Calu3 (cell line): ENCODE measurements at regions of chr3 and their contacts with region 1.

Region 1: DNA sequence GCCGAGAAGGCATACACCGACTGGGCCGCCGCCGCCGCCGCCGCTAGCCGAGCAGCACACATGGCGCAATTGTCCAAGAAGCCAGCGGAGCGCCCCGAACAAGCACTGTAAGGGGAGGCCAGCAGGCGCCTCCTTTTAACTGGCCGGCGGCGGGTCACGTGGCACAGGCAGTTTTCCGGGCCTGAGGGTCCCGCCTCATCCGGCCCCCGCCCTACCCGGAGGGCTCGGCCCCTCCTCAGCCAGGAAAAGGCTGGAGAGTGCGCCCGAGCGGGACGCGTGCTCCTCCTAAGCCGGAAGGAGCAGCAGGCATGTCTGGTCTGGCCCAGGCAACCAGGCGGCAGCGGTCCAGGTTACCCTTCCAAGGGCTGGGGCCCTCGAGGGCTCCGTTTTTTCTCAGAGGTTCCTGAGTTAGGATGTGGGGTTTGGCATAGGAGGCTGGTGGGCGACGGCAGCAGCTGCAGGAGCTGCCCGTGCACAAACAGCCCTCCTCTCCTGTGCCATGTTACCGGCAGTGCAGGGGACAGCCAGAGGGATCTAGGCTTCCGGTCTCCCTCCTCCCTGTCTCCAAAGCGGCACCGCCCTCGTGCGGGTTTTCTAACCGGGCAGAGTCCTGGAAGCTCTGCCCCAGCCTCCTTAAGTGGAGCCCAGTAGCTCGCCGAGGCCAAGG is at the start of gene GPX1:
- DNase-seq: peak; percentile 94
- H3K4me3 Mint-ChIP-seq: peak within 1 kb of the TSS; percentile 87
- H3K27ac Mint-ChIP-seq: peak within 1 kb of the TSS; percentile 81
- H3K4me1 Mint-ChIP-seq: peaks cover 9% of the 10 kb centered on the region
- H3K27me3 Mint-ChIP-seq: no peaks in the 10 kb centered on the region
- CTCF ChIP-seq: no peak
- total RNA-seq, gene GPX1: 143 and 151 TPM in 2 replicates

Region 2: DNA sequence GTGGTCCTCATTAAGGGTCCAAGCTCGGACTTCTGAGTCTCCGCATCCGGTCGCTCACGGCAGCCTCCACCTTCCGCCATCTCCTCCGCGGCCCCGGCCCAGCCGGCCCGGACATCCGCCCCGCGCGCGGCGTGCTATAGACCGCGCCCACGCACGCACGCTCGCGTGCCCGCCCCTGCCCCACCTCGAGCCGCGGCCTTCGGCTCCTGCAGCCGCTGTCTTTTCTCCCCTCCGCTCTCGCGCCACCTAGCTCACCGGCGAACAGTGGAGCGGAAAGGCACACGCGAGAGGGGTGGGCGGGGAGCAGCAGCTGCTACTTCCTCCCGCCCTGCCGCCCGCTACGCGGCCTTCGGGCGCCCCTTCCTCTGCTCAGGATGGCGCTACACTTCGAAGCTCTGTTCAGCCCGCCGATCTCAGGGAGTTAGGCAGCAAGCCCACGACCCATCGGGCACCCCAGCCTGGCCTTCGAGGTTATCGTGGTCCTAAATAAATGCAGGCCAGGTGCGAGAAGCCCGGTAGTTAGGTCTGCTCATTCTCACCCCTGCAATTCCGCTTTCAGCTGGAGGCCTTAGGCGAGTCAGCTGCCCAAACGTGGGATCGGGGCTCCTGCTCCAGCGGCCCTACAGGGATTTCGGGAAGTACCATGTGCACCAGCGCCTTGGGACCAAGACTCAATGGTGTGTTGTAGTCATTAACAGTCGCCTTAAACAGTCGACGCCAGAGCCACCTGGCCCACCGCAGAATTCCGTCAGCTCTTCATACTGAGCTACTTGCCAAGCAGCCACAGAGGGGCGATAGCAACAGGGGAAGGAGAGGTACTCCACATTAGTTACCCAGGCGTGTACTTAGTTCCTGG is 18.2 kb before region 1 on chr3 and contains the start of gene USP4:
- CTCF ChIA-PET with region 1: interaction called, 10 read pairs
- intact Hi-C with region 1: no loop called
- DNase-seq: peak; percentile 90
- H3K4me3 Mint-ChIP-seq: peak within 1 kb of the TSS; percentile 88
- H3K27ac Mint-ChIP-seq: peak within 1 kb of the TSS; percentile 84
- H3K4me1 Mint-ChIP-seq: peaks cover 6% of the 10 kb centered on the region
- H3K27me3 Mint-ChIP-seq: no peaks in the 10 kb centered on the region
- CTCF ChIP-seq: no peak
- total RNA-seq, gene USP4: 40.0 and 43.5 TPM in 2 replicates